ENCODE measurements at regions of chr18 and their contacts with region 1.

Region 1: DNA sequence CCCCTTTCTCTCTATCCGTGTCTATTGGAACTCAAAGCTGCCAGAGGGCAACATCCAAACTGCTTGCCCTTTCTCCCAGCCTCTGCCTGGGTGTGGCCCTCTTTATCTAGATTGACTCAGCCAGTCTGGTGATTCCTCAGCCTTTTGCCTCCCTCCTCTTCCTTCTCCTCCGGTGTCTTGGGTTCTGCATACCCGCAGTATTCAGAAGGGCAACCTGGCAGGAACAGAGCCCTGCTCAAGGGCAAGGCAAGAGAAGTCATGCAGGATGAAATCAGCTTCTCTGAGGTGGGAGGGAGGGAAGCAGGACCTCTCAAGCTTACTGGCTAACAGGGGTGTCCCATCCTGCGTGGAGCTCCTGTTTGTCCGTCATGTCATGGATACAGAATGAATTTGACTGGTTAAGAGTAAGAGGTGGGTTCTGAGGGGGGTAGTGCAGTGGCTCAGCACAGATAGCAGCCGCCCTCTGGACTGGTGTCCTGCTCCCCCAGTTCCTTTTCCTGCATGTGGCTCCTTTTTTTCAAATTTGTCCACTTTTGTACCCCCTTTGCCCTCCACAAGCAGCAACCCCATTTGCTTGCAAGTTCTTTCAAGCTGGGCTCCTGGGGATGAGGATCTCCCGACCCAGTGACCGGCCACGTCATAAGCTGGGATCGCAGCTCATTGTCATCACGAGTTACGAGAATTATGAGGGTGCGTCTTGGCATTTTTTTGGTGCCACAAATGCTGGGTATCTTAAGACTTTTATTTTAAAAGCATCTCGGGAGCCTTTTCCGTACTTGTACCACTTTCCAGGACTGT is 154.1 kb downstream of the FHOD3 start:
- DNase-seq: no peak
- H3K4me3 ChIP-seq: no peak overlapping the region
- H3K27ac ChIP-seq: no peak overlapping the region
- H3K4me1 ChIP-seq: no peaks in the 10 kb centered on the region
- H3K27me3 ChIP-seq: peaks cover 0 to 6% (median 0%) of the 10 kb centered on the region in 7 donors
- CTCF ChIP-seq: no peak
- POLR2A ChIP-seq: no peak

Region 2: DNA sequence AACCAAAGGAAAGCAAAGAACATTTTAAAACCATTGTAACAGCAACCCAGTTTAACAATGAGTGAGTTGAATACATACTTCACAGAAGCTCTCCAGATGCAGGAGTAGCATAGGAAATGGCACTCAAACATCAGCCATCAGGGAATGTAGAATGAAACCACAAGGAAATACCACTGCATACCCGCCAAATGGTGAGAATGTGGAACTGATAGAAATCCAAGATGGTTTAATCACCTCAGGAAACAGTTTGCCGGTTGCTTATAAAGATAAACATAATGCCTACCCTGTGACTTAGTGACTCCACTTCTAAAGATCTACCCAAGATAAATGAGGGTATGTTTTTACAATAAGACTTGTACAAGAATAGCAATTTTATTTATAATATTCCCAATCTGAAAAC is 738.1 kb before region 1 on chr18:
- intact Hi-C with region 1: no loop called
- DNase-seq: no peak
- H3K4me3 ChIP-seq: no peak overlapping the region
- H3K27ac ChIP-seq: no peak overlapping the region
- H3K4me1 ChIP-seq: no peaks in the 10 kb centered on the region
- H3K27me3 ChIP-seq: no peaks in the 10 kb centered on the region
- CTCF ChIP-seq: no peak
- POLR2A ChIP-seq: no peak

Region 3: DNA sequence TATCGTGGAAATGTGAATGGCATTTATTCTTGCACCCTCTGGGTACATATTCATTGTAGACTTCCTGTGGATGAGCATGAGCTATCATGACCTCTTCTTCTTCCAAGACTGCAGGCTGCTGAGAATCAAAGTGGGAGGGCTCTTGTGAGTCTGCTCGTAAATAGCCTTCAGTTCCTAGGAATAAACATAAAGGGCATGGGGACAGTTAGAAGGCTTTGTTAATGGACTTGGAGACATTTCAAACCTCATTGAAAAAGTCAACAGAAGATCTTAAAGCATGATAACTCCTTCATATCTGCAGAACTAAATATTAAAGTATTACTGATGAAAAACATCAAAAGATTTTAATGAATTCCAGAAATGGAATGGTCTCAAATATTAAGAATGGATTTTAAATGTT is 337.4 kb before region 1 on chr18:
- intact Hi-C with region 1: loop called (anchors 10 kb)
- DNase-seq: no peak
- H3K4me3 ChIP-seq: no peak overlapping the region
- H3K27ac ChIP-seq: no peak overlapping the region
- H3K4me1 ChIP-seq: no peaks in the 10 kb centered on the region
- H3K27me3 ChIP-seq: no peaks in the 10 kb centered on the region
- CTCF ChIP-seq: no peak
- POLR2A ChIP-seq: no peak

Region 4: GRCh38 chr18:37684590-37684989 is 1232.9 kb after region 1 on chr18:
- intact Hi-C with region 1: no loop called
- DNase-seq: no peak
- H3K4me3 ChIP-seq: no peak overlapping the region
- H3K27ac ChIP-seq: no peak overlapping the region
- H3K4me1 ChIP-seq: peaks cover 0 to 2% (median 0%) of the 10 kb centered on the region in 6 donors
- H3K27me3 ChIP-seq: no peaks in the 10 kb centered on the region
- CTCF ChIP-seq: no peak
- POLR2A ChIP-seq: no peak

Measured in spleen (tissue), 13 donors.